ENCODE measurements at regions of chr7 and their contacts with region 1.

Region 1: GRCh38 chr7:55415173-55415778 is 50.1 kb downstream of the LANCL2 start:
- DNase-seq: peak; percentile 79
- H3K4me3 Mint-ChIP-seq: no peak overlapping the region
- H3K27ac Mint-ChIP-seq: no peak overlapping the region
- H3K4me1 Mint-ChIP-seq: peaks cover 2% of the 10 kb centered on the region
- H3K27me3 Mint-ChIP-seq: no peaks in the 10 kb centered on the region

Region 2: DNA sequence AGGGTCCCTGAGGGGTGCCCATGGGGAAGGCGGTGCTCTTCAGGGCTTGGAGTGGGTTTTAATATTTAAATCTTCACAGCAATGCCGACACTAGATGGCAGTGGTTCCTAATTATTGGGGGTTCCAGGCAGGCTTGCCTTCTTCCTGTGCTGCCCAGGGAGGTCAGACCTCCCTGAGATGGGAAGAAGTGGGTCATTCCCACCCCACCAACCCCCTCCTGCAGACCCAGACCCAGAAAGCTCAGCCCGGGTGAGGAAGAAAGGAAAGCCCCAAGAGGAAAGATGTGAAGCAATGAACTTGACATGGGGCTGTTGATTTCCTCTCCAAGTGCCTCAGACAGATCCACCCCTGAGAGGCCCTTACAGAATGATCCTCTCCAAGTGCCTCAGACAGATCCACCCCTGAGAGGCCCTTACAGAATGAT is 135.2 kb before region 1 on chr7:
- CTCF ChIA-PET with region 1: interaction called, 43 read pairs
- POLR2A ChIA-PET with region 1: no interaction called
- DNase-seq: peak; percentile 56
- H3K4me3 Mint-ChIP-seq: no peak overlapping the region
- H3K27ac Mint-ChIP-seq: no peak overlapping the region
- H3K4me1 Mint-ChIP-seq: no peaks in the 10 kb centered on the region
- H3K27me3 Mint-ChIP-seq: no peaks in the 10 kb centered on the region

Region 3: DNA sequence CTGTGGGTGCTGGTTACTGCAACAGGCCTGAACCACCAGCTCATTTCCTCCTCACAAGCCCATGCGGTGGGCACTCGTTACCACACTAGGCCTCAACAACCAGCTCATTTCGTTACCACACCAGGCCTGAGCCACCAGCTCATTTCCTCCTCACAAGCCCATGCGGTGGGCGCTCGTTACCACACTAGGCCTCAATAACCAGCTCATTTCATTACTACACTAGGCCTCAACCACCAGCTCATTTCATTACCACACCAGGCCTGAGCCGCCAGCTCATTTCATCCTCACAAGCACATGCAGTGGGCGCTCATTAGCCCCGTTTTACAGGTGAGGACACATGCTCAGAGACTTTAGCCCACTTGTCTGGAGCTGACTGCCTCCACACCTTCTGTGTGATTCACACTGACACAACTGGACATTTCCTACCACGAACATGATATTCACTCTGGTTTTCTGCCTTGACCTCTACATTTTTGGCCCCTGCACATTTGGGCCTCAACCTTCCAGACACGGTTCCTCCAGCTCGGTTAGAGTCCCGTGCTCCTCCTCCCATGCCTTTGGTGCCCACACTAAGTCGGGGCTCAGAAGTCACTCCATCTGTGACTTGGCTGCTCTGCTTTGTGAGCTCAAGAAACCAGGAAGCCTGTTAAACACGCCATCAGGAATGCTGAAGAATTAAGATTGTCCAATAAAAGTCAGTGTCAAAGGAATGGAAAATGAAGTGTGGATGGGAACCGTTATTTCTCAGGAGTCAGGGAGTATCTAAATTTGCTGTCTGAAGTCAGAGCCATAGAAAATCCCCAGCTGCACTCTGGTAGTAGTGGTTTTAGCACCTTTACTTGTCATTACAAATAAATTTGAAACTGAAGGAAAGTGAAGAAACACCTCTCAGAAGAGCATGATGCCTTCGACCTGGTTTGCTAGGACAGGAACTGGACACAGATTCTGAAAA is 106.0 kb before region 1 on chr7:
- CTCF ChIA-PET with region 1: interaction called, 14 read pairs
- POLR2A ChIA-PET with region 1: interaction called, 3 read pairs
- DNase-seq: peak; percentile 88
- H3K4me3 Mint-ChIP-seq: peak overlapping the region; percentile 19
- H3K27ac Mint-ChIP-seq: peak overlapping the region; percentile 66
- H3K4me1 Mint-ChIP-seq: peaks cover 49% of the 10 kb centered on the region
- H3K27me3 Mint-ChIP-seq: peaks cover 57% of the 10 kb centered on the region

Region 4: DNA sequence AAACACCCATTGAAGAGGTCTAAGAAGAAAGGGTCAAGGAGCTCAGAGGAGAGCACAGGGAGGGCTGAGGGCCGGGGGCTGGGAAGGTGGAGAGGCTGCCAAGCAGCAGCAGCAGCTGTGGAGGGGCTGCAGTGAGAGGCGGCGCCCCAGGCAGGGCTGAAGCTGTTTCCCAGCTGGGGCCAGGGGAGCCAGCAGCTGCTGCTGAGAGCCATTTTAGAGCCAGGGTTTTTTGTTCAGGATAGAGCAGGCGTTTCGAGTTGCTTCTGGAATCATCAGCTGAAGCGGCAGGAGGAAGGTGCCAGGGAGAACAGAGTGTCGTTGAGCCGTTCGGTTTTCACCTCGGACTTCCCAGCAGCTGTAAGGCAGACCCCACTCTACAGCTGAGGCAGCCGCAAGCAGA is 12.5 kb after region 1 on chr7:
- CTCF ChIA-PET with region 1: interaction called, 15 read pairs
- POLR2A ChIA-PET with region 1: no interaction called
- DNase-seq: no peak
- H3K4me3 Mint-ChIP-seq: no peak overlapping the region
- H3K27ac Mint-ChIP-seq: no peak overlapping the region
- H3K4me1 Mint-ChIP-seq: peaks cover 6% of the 10 kb centered on the region
- H3K27me3 Mint-ChIP-seq: no peaks in the 10 kb centered on the region